ENCODE measurements at regions of chr3 and their contacts with region 1.

Region 1: GRCh38 chr3:16264708-16265454 is at the starts of genes DPH3 and OXNAD1:
- DNase-seq: peak; percentile 99
- ATAC-seq: peak; percentile 96
- H3K4me3 ChIP-seq: peak within 1 kb of the TSS; percentile 80 to 97 (median 90)
- H3K4me3 Mint-ChIP-seq: peak within 1 kb of the TSS; percentile 99
- H3K27ac ChIP-seq: peak within 1 kb of the TSS; percentile 85 to 97
- H3K27ac Mint-ChIP-seq: peak within 1 kb of the TSS; percentile 99
- H3K4me1 ChIP-seq: peaks cover 12 to 13% of the 10 kb centered on the region in 2 donors
- H3K4me1 Mint-ChIP-seq: peaks cover 25% of the 10 kb centered on the region
- H3K27me3 ChIP-seq: no peaks in the 10 kb centered on the region
- H3K27me3 Mint-ChIP-seq: no peaks in the 10 kb centered on the region
- CTCF ChIP-seq: no peak
- total RNA-seq, gene DPH3: 11.5 and 12.9 TPM in 2 replicates
- total RNA-seq, gene OXNAD1: 11.2 and 12.3 TPM in 2 replicates

Region 2: DNA sequence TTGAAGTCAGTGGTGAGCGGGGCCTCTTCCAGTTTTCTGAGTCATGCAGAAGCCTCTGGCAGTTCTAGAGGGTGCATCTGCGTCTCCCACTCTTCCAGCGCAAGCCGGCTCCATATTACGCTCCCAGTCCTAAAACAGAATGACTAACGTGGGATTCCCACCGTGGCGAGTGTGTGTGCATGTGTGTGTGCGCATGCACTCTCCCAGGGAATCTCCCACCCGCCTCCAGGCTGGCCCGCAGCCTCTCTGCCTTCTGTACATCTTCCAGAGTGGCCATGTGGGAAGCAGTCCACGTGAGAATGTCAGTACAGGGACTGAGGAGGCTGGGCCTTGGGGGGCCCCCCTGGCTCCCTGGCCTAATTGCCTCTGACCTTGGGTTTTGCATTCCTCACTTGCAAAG is 1998.5 kb before region 1 on chr3:
- CTCF ChIA-PET with region 1: no interaction called
- POLR2A ChIA-PET with region 1: no interaction called
- intact Hi-C with region 1: no loop called
- DNase-seq: no peak
- ATAC-seq: no peak
- H3K4me3 ChIP-seq: no peak overlapping the region
- H3K4me3 Mint-ChIP-seq: no peak overlapping the region
- H3K27ac ChIP-seq: no peak overlapping the region
- H3K27ac Mint-ChIP-seq: no peak overlapping the region
- H3K4me1 ChIP-seq: no peaks in the 10 kb centered on the region
- H3K4me1 Mint-ChIP-seq: no peaks in the 10 kb centered on the region
- H3K27me3 ChIP-seq: peaks cover 0 to 2% (median under 1%) of the 10 kb centered on the region in 4 experiments
- H3K27me3 Mint-ChIP-seq: peaks cover 27% of the 10 kb centered on the region
- CTCF ChIP-seq: no peak

Region 3: DNA sequence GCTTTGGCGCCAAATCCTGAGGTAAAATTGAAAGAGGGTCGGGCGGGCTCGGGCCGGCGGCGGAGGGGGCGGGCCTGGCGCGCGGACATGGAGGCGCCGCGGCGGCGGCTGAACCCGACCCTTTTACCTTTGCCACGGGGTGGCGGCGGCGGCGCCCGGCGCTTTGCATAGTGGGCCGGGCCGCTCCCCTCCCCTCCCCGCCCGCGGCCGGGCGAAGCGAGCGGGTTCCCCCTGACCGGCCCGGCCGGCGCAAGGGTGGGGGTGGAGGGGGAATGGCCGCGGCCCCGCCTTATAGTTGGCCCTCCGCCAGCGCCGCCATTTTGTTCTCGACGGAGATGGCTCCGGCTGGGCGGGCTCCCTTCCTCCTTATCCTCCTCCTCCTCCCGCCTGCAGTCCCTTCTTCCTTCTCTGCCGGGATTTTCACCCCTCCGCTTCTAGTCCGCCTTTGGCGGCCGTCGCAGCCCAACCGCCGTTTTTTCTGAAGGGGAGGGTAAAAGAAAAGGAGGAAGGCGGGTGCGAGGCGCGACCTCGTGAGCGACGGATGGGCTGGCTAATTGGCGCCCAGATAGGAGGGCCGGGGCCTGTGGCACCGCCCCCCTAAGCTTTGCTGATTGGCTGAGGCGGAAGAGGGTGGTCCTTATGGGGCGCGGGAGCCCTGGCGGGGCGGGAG is 1316.9 kb before region 1 on chr3:
- CTCF ChIA-PET with region 1: no interaction called
- POLR2A ChIA-PET with region 1: no interaction called
- intact Hi-C with region 1: loop called (anchors 2 kb)
- DNase-seq: peak; percentile 98
- ATAC-seq: peak; percentile 86
- H3K4me3 ChIP-seq: peak overlapping the region; percentile 30 to 100 (median 94)
- H3K4me3 Mint-ChIP-seq: peak overlapping the region; percentile 99
- H3K27ac ChIP-seq: peak overlapping the region; percentile 98 to 99
- H3K27ac Mint-ChIP-seq: peak overlapping the region; percentile 100
- H3K4me1 ChIP-seq: peaks cover 25 to 29% of the 10 kb centered on the region in 2 donors
- H3K4me1 Mint-ChIP-seq: peaks cover 49% of the 10 kb centered on the region
- H3K27me3 ChIP-seq: no peaks in the 10 kb centered on the region
- H3K27me3 Mint-ChIP-seq: no peaks in the 10 kb centered on the region
- CTCF ChIP-seq: no peak

Region 4: GRCh38 chr3:15601397-15602145 is 663.3 kb before region 1 on chr3 and contains the starts of genes BTD and HACL1:
- CTCF ChIA-PET with region 1: no interaction called
- POLR2A ChIA-PET with region 1: no interaction called
- intact Hi-C with region 1: loop called (anchors 1 kb)
- DNase-seq: peak; percentile 99
- ATAC-seq: peak; percentile 88
- H3K4me3 ChIP-seq: peak within 1 kb of the TSS; percentile 67 to 99 (median 92)
- H3K4me3 Mint-ChIP-seq: peak within 1 kb of the TSS; percentile 100
- H3K27ac ChIP-seq: peak within 1 kb of the TSS; percentile 81 to 87
- H3K27ac Mint-ChIP-seq: peak within 1 kb of the TSS; percentile 99
- H3K4me1 ChIP-seq: peaks cover 16 to 23% of the 10 kb centered on the region in 2 donors
- H3K4me1 Mint-ChIP-seq: peaks cover 41% of the 10 kb centered on the region
- H3K27me3 ChIP-seq: no peaks in the 10 kb centered on the region
- H3K27me3 Mint-ChIP-seq: no peaks in the 10 kb centered on the region
- CTCF ChIP-seq: peak; percentile 31
- total RNA-seq, gene BTD: 21.9 and 25.3 TPM in 2 replicates
- total RNA-seq, gene HACL1: 38.7 and 38.9 TPM in 2 replicates

Region 5: GRCh38 chr3:16370872-16371740 is 106.2 kb after region 1 on chr3:
- CTCF ChIA-PET with region 1: no interaction called
- POLR2A ChIA-PET with region 1: no interaction called
- intact Hi-C with region 1: loop called (anchors 5 kb)
- DNase-seq: peak; percentile 77
- ATAC-seq: peak; percentile 53
- H3K4me3 ChIP-seq: peak overlapping the region in 1 of 5 experiments; percentile 15
- H3K4me3 Mint-ChIP-seq: peak overlapping the region; percentile 66
- H3K27ac ChIP-seq: peak overlapping the region; percentile 62 to 87
- H3K27ac Mint-ChIP-seq: peak overlapping the region; percentile 91
- H3K4me1 ChIP-seq: peaks cover 75 to 77% of the 10 kb centered on the region in 2 donors
- H3K4me1 Mint-ChIP-seq: peaks cover 73% of the 10 kb centered on the region
- H3K27me3 ChIP-seq: no peaks in the 10 kb centered on the region
- H3K27me3 Mint-ChIP-seq: no peaks in the 10 kb centered on the region
- CTCF ChIP-seq: no peak

Region 6: DNA sequence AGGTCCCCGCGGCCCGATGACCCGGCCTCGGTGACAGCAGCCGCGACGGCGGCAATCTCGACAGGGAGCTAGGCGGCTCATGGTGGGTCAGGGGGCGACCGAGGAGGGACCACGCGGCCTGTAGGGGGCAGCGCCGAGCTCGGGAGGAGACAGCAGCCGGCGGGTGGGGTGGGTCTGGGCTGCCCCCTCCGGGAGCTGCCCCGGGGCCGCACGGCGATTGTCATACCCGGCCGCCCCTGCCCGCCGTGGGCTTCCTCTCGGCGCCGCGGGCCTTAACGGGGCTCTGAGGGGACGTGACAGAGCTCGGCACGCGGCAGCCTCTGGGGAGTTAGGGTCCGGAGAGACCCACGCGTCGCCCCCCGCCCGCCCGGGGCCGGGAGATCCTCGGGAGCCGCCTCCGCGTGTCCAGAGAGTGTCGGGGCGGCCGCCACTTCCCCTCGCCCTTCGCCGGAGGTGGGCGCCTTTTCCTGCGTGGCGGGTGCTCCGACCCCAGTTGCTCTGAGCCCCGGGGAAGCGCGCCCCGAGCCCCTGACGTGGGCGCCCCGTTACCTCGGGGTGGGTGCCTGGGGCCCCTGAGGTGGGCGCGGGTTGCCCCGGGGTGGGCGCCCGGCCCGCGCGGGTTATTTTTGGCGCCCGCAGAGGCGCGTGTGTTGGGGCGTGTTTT is 619.3 kb after region 1 on chr3:
- CTCF ChIA-PET with region 1: no interaction called
- POLR2A ChIA-PET with region 1: no interaction called
- intact Hi-C with region 1: loop called (anchors 2 kb)
- DNase-seq: peak; percentile 84
- ATAC-seq: peak; percentile 60
- H3K4me3 ChIP-seq: peak overlapping the region in 4 of 5 experiments; percentile 77 to 98 (median 96)
- H3K4me3 Mint-ChIP-seq: peak overlapping the region; percentile 97
- H3K27ac ChIP-seq: peak overlapping the region; percentile 82 to 90
- H3K27ac Mint-ChIP-seq: peak overlapping the region; percentile 95
- H3K4me1 ChIP-seq: peaks cover 17 to 23% of the 10 kb centered on the region in 2 donors
- H3K4me1 Mint-ChIP-seq: peaks cover 40% of the 10 kb centered on the region
- H3K27me3 ChIP-seq: no peaks in the 10 kb centered on the region
- H3K27me3 Mint-ChIP-seq: no peaks in the 10 kb centered on the region
- CTCF ChIP-seq: peak; percentile 71

Region 7: DNA sequence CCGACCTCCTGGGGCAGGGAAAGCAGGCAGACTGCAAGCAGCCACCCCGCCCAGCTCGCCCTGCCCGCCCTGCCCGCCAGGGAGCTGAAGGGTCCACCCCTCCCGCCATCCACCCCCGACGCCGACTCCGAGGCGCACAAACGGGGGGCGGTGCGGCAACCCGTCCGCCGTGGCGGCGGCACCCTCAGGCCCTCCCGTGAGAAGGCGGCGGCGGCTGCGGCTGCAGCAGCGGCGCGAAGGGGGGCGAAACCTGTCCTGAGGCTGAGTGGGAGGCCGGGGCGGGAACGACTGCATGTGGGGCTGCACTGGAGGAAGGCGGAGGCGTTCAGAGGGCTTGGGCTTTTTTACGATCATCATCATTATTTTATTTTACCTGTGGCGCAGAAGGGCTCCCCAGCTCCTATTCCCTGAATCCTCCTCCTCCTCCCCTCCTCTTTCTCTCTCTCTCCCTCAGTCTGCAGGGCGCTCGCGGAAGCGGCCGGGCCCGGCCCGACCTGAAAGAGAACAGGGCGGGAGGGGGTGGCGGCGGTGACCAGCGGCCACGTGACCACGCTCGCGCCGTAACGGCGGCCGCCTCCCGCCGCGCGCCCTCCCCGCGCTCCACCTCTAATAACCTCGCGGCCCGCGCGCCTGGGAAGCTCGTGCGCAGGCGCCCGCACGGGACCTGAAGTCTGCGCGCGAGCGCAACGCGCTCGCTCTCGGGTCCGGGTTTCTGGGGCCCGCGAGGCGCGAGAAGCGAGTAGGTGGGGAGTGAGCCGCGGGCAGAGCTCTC is 1477.4 kb after region 1 on chr3 and contains the start of gene TBC1D5:
- CTCF ChIA-PET with region 1: no interaction called
- POLR2A ChIA-PET with region 1: no interaction called
- intact Hi-C with region 1: loop called (anchors 2 kb)
- DNase-seq: peak; percentile 97
- ATAC-seq: peak; percentile 85
- H3K4me3 ChIP-seq: peak within 1 kb of the TSS; percentile 81 to 84 (median 83)
- H3K4me3 Mint-ChIP-seq: peak within 1 kb of the TSS; percentile 96
- H3K27ac ChIP-seq: peak within 1 kb of the TSS; percentile 89 to 93
- H3K27ac Mint-ChIP-seq: peak within 1 kb of the TSS; percentile 98
- H3K4me1 ChIP-seq: peaks cover 43 to 49% of the 10 kb centered on the region in 2 donors
- H3K4me1 Mint-ChIP-seq: peaks cover 65% of the 10 kb centered on the region
- H3K27me3 ChIP-seq: no peaks in the 10 kb centered on the region
- H3K27me3 Mint-ChIP-seq: no peaks in the 10 kb centered on the region
- CTCF ChIP-seq: no peak
- total RNA-seq, gene TBC1D5: 111 and 112 TPM in 2 replicates